GM12878 (cell line): ENCODE measurements at regions of chr9 and their contacts with region 1.

Region 1: GRCh38 chr9:137240861-137241489 is at the start of gene TUBB4B:
- DNase-seq: peak; percentile 100
- ATAC-seq: peak; percentile 86
- H3K4me3 ChIP-seq: peak within 1 kb of the TSS; percentile 98
- H3K27ac ChIP-seq: peak within 1 kb of the TSS; percentile 83
- H3K4me1 ChIP-seq: peaks cover 42% of the 10 kb centered on the region
- H3K27me3 ChIP-seq: no peaks in the 10 kb centered on the region
- CTCF ChIP-seq: no peak
- EP300 ChIP-seq: peak in 1 of 2 experiments; percentile 39; a peak in 2 of 4 replicates
- POLR2A ChIP-seq: no peak
- RAD21 ChIP-seq: no peak
- polyA plus RNA-seq, gene TUBB4B: 23.0 to 63.2 TPM

Region 2: DNA sequence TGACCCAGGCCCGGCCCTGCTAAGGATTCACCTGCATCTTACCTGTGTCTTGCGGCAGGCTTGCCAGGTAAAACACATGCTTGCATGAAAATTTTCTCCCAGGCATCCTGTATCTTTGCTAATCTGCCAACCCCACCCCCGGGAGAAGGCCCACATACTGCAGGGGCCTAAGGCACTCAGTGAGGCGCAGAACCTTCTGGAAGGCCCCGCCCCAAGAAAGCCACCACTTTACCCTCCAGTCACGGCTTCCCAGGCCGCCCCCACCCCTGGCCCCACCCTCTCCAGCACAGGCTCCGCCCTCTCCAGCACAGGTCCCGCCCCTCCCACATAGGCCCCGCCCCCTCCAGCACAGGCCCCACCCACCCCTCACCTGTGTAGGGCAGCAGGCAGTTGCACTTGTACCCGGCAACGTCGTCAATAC is 728.3 kb before region 1 on chr9:
- CTCF ChIA-PET with region 1: no interaction called
- POLR2A ChIA-PET with region 1: no interaction called
- RAD21 ChIA-PET with region 1: no interaction called
- SMC1A ChIA-PET with region 1: no interaction called
- in situ Hi-C with region 1: no loop called
- intact Hi-C with region 1: no loop called
- DNase-seq: no peak
- ATAC-seq: peak; percentile 85
- H3K4me3 ChIP-seq: no peak overlapping the region
- H3K27ac ChIP-seq: no peak overlapping the region
- H3K4me1 ChIP-seq: no peaks in the 10 kb centered on the region
- H3K27me3 ChIP-seq: no peaks in the 10 kb centered on the region
- CTCF ChIP-seq: no peak
- EP300 ChIP-seq: no peak
- POLR2A ChIP-seq: no peak
- RAD21 ChIP-seq: no peak

Region 3: GRCh38 chr9:136790927-136791641 is 449.9 kb before region 1 on chr9 and contains the start of gene TMEM141:
- CTCF ChIA-PET with region 1: interaction called, 3 read pairs
- POLR2A ChIA-PET with region 1: no interaction called
- RAD21 ChIA-PET with region 1: no interaction called
- SMC1A ChIA-PET with region 1: no interaction called
- in situ Hi-C with region 1: no loop called
- intact Hi-C with region 1: loop called (anchors 5 kb)
- DNase-seq: peak; percentile 92
- ATAC-seq: peak; percentile 94
- H3K4me3 ChIP-seq: peak within 1 kb of the TSS; percentile 77
- H3K27ac ChIP-seq: peak within 1 kb of the TSS; percentile 82
- H3K4me1 ChIP-seq: peaks cover 10% of the 10 kb centered on the region
- H3K27me3 ChIP-seq: no peaks in the 10 kb centered on the region
- CTCF ChIP-seq: no peak
- EP300 ChIP-seq: no peak
- POLR2A ChIP-seq: peak; percentile 83
- RAD21 ChIP-seq: no peak
- polyA plus RNA-seq, gene TMEM141: 7.8 to 13.3 TPM

Region 4: GRCh38 chr9:137129456-137130175 is 111.4 kb before region 1 on chr9:
- CTCF ChIA-PET with region 1: interaction called, 9 read pairs
- POLR2A ChIA-PET with region 1: interaction called, 11 read pairs
- RAD21 ChIA-PET with region 1: interaction called, 3 read pairs
- SMC1A ChIA-PET with region 1: interaction called, 4 read pairs
- in situ Hi-C with region 1: no loop called
- intact Hi-C with region 1: no loop called
- DNase-seq: peak; percentile 75
- ATAC-seq: peak; percentile 95
- H3K4me3 ChIP-seq: peak overlapping the region; percentile 72
- H3K27ac ChIP-seq: peak overlapping the region; percentile 82
- H3K4me1 ChIP-seq: peaks cover 8% of the 10 kb centered on the region
- H3K27me3 ChIP-seq: no peaks in the 10 kb centered on the region
- CTCF ChIP-seq: no peak
- EP300 ChIP-seq: no peak
- POLR2A ChIP-seq: peak; percentile 83
- RAD21 ChIP-seq: no peak

Region 5: DNA sequence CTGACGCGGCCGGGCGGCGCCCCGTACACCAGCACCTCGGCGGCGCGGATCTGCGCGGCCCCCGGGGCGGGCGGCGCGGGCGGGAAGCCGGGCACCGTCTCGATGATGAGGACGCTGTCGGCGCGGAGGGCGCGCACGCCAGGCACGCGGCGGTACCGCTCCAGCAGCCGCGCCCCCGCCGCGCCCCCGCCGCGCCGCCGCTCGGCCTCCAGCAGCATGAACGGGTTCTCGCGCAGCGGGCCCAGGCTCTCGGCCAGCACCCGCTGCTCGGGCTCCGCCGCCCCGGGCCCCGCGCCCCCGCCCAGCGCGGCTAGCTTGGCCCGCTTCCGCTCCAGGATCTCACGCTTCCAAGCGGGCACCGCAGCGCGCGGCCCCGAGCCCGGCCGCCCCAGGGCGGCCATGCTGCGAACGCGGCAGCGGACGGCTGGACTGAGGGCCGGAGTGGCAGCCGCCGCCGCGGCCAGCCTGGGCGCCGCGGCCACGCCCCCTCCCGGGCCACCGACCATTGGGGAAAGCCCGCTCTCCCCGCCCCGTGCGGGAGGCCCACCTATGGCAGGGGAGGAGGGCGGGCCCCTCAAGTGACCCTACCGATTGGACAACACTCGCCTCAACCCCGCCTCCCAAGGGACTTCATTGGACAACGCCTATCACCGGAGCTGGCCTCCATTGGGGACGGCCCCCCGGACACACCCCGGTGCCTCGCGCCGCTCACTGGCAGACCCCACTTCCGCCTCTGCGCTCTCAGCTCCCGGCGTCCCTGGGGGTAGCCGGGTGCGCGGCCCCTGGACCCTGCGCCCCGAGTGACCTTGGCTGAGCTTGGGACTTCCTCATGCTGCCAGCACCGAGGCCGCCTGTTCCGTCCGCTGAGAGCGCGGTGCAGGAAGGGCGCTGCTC is 40.4 kb before region 1 on chr9 and contains the start of gene TPRN:
- CTCF ChIA-PET with region 1: interaction called, 6 read pairs
- POLR2A ChIA-PET with region 1: interaction called, 17 read pairs
- RAD21 ChIA-PET with region 1: interaction called, 4 read pairs
- SMC1A ChIA-PET with region 1: no interaction called
- in situ Hi-C with region 1: no loop called
- intact Hi-C with region 1: no loop called
- DNase-seq: peak; percentile 95
- ATAC-seq: peak; percentile 96
- H3K4me3 ChIP-seq: peak within 1 kb of the TSS; percentile 77
- H3K27ac ChIP-seq: peak within 1 kb of the TSS; percentile 62
- H3K4me1 ChIP-seq: peaks cover 32% of the 10 kb centered on the region
- H3K27me3 ChIP-seq: no peaks in the 10 kb centered on the region
- CTCF ChIP-seq: no peak
- EP300 ChIP-seq: no peak
- POLR2A ChIP-seq: peak; percentile 95
- RAD21 ChIP-seq: no peak
- polyA plus RNA-seq, gene TPRN: 0.18 to 0.75 TPM

Region 6: DNA sequence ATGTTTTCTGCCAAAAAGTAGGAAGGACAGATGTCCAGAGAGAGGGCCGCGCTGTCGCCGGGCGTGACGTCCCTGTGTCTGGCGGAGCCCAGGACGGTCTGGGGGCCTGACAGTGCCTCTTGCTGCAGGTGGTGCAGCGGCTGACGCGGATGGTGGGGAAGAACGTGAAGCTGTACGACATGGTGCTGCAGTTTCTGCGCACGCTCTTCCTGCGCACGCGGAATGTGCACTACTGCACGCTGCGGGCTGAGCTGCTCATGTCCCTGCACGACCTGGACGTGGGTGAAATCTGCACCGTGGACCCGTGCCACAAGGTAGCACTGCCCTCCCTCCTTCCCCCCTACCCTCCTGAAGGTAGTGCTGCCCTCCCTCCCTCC is 21.9 kb after region 1 on chr9:
- CTCF ChIA-PET with region 1: interaction called, 24 read pairs
- POLR2A ChIA-PET with region 1: interaction called, 112 read pairs
- RAD21 ChIA-PET with region 1: interaction called, 6 read pairs
- SMC1A ChIA-PET with region 1: interaction called, 5 read pairs
- in situ Hi-C with region 1: no loop called
- intact Hi-C with region 1: no loop called
- DNase-seq: no peak
- ATAC-seq: no peak
- H3K4me3 ChIP-seq: no peak overlapping the region
- H3K27ac ChIP-seq: no peak overlapping the region
- H3K4me1 ChIP-seq: peaks cover 2% of the 10 kb centered on the region
- H3K27me3 ChIP-seq: no peaks in the 10 kb centered on the region
- CTCF ChIP-seq: no peak
- EP300 ChIP-seq: no peak
- POLR2A ChIP-seq: no peak
- RAD21 ChIP-seq: no peak

Region 7: DNA sequence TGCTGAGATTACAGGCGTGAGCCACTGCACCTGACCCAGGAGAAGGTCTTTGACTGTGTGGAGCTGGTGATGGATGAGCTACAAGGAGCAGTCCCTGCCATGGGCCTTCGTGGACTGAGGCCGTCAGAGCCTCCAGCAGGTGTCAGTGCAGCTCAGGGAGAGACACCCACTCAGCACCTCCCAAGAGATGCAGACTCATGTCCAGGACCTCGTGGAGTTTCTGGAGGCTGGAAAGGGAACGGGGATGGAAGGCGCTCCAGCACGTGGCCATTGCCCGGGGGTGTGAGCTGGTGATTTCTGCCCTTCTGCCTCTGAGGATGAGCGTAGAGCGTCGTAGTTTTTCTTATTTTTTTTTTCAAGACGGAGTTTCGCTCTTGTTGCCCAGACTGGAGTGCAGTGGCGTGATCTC is 46.0 kb after region 1 on chr9:
- CTCF ChIA-PET with region 1: interaction called, 14 read pairs
- POLR2A ChIA-PET with region 1: interaction called, 3 read pairs
- RAD21 ChIA-PET with region 1: interaction called, 4 read pairs
- SMC1A ChIA-PET with region 1: interaction called, 3 read pairs
- in situ Hi-C with region 1: no loop called
- intact Hi-C with region 1: no loop called
- DNase-seq: no peak
- ATAC-seq: peak; percentile 87
- H3K4me3 ChIP-seq: no peak overlapping the region
- H3K27ac ChIP-seq: no peak overlapping the region
- H3K4me1 ChIP-seq: peaks cover 16% of the 10 kb centered on the region
- H3K27me3 ChIP-seq: no peaks in the 10 kb centered on the region
- CTCF ChIP-seq: peak; percentile 45 to 59 (median 52); a peak in 5 of 6 replicates
- EP300 ChIP-seq: no peak
- POLR2A ChIP-seq: no peak
- RAD21 ChIP-seq: peak; percentile 62